Activated CD4-positive, alpha-beta memory T cell treated with anti-CD3 and anti-CD28 coated beads, Interleukin-2, amount 10 ng/mL, durations not matched to agents 7 days and 5 days (primary cell): ENCODE measurements at regions of chr11 and their contacts with region 1.

Region 1: GRCh38 chr11:18775492-18776292 is 15.9 kb downstream of the PTPN5 start:
- DNase-seq: peak; percentile 77
- H3K4me3 Mint-ChIP-seq: no peak overlapping the region
- H3K27ac Mint-ChIP-seq: no peak overlapping the region
- H3K4me1 Mint-ChIP-seq: peaks cover 42% of the 10 kb centered on the region
- H3K27me3 Mint-ChIP-seq: peaks cover 11% of the 10 kb centered on the region

Region 2: GRCh38 chr11:18765554-18765953 is 10.1 kb before region 1 on chr11:
- CTCF ChIA-PET with region 1: interaction called, 24 read pairs
- POLR2A ChIA-PET with region 1: interaction called, 4 read pairs
- DNase-seq: no peak
- H3K4me3 Mint-ChIP-seq: no peak overlapping the region
- H3K27ac Mint-ChIP-seq: no peak overlapping the region
- H3K4me1 Mint-ChIP-seq: peaks cover 35% of the 10 kb centered on the region
- H3K27me3 Mint-ChIP-seq: peaks cover 7% of the 10 kb centered on the region

Region 3: GRCh38 chr11:18802381-18803257 is 26.9 kb after region 1 on chr11:
- CTCF ChIA-PET with region 1: interaction called, 29 read pairs
- POLR2A ChIA-PET with region 1: interaction called, 4 read pairs
- DNase-seq: peak; percentile 52
- H3K4me3 Mint-ChIP-seq: no peak overlapping the region
- H3K27ac Mint-ChIP-seq: no peak overlapping the region
- H3K4me1 Mint-ChIP-seq: peaks cover 6% of the 10 kb centered on the region
- H3K27me3 Mint-ChIP-seq: peaks cover 32% of the 10 kb centered on the region

Region 4: GRCh38 chr11:18853086-18853720 is 77.5 kb after region 1 on chr11:
- CTCF ChIA-PET with region 1: interaction called, 11 read pairs
- POLR2A ChIA-PET with region 1: no interaction called
- DNase-seq: no peak
- H3K4me3 Mint-ChIP-seq: no peak overlapping the region
- H3K27ac Mint-ChIP-seq: no peak overlapping the region
- H3K4me1 Mint-ChIP-seq: no peaks in the 10 kb centered on the region
- H3K27me3 Mint-ChIP-seq: peaks cover 37% of the 10 kb centered on the region